Esophagus muscularis mucosa (tissue), 4 donors: ENCODE measurements at regions of chr16 and their contacts with region 1.

Region 1: DNA sequence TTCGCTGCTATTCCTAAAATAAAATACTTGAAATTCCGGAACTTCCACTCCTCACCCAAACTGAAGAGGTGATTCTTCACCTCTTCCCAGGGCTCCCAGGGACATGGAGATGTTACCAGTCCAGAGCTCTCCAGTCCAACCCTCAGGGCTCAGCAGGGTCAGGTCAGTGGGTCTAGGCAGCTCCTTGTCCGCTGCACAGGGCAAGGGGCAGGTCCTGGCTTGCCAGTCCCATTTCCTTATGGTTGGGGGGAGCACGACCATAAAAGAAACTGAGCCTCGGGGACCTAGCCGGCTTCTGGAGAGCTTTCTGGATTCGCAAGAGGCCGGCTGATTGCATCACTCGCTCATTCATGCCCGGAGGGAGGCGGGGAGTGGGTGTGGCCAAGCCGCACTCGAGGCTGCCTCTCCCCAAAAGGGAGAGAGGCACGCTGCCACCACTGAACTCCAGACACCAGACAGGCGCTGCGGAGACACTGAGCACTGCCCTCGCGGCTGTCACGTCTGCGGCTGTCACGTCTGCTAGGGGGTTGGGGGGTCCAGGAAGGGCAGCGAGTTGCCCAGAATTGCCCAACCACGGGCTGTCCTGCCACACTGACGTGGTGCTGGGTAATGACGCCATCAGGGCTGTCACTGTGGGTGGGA is 15.8 kb downstream of the SLC7A5 start:
- DNase-seq: peak; percentile 98
- H3K4me3 ChIP-seq: peak overlapping the region; percentile 42 to 59 (median 42)
- H3K27ac ChIP-seq: peak overlapping the region; percentile 78 to 84 (median 82)
- H3K4me1 ChIP-seq: peaks cover 38 to 77% (median 72%) of the 10 kb centered on the region in 4 donors
- H3K27me3 ChIP-seq: no peaks in the 10 kb centered on the region
- CTCF ChIP-seq: no peak
- EP300 ChIP-seq: peak; percentile 72
- POLR2A ChIP-seq: no peak

Region 2: DNA sequence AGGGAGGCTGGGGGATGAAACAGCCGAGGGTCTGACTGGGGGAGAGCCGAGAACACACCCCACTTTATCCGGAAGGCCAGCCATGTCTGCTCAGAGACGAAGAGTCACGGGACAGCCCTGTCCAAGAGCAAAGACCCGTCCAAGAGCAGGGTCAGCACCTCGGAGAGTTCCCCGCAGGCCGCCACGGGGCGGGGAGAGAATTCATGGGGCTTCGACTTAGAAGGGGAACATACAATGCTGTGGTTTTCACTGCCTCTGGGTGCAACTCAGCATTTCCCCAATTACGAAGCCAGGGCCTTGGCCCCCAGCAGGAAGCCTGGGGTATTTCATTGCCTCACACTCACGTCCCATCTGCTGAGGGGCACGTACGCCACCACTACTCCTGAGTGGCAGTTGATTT is 192.0 kb before region 1 on chr16:
- intact Hi-C with region 1: no loop called
- DNase-seq: no peak
- H3K4me3 ChIP-seq: no peak overlapping the region
- H3K27ac ChIP-seq: no peak overlapping the region
- H3K4me1 ChIP-seq: no peaks in the 10 kb centered on the region
- H3K27me3 ChIP-seq: peaks cover 0 to 95% (median 0%) of the 10 kb centered on the region in 4 donors
- CTCF ChIP-seq: no peak
- EP300 ChIP-seq: no peak
- POLR2A ChIP-seq: no peak

Region 3: DNA sequence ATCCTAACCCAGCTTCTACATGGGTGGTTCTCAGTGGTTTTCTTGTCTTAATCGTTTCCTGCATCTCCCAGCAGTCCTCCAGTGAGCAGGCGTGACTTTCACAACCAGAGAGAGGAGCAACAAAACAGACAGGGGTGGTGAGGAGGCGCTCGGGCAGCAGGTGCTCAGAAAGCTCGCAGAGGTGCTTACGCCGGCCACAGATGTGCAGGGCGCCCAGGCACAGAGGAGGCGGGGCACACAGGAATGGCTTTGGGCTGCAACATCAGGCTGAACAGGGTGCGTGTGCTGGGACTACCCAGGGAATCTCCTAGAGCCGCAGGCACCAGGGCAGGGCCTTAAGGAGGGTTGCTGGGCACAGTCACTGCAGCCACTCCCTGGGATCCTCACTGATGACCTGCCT is 120.3 kb before region 1 on chr16:
- intact Hi-C with region 1: no loop called
- DNase-seq: no peak
- H3K4me3 ChIP-seq: no peak overlapping the region
- H3K27ac ChIP-seq: no peak overlapping the region
- H3K4me1 ChIP-seq: no peaks in the 10 kb centered on the region
- H3K27me3 ChIP-seq: no peaks in the 10 kb centered on the region
- CTCF ChIP-seq: no peak
- EP300 ChIP-seq: no peak
- POLR2A ChIP-seq: no peak

Region 4: DNA sequence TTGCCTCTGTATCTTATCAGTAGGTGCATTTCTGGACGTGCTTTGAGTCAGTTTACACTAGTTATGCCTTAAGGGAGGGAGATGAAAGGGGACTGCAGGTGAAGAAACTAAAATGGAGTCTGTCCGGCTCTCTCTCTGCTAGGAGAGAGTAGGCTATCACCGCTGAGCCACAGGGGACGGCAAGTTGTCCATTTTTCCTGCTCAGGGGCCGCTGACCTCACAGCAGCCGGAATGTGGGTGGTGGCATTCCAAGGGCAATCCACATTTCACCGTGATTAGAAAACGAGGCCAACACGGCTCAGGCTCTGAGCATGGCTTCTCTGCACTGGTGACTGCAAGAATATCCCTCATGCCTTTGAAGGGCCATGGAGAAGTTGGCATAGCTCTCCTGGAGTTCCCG is 68.7 kb before region 1 on chr16:
- intact Hi-C with region 1: no loop called
- DNase-seq: no peak
- H3K4me3 ChIP-seq: no peak overlapping the region
- H3K27ac ChIP-seq: no peak overlapping the region
- H3K4me1 ChIP-seq: peaks cover 0 to 27% (median 25%) of the 10 kb centered on the region in 4 donors
- H3K27me3 ChIP-seq: peaks cover 0 to 6% (median 0%) of the 10 kb centered on the region in 4 donors
- CTCF ChIP-seq: no peak
- EP300 ChIP-seq: no peak
- POLR2A ChIP-seq: no peak

Region 5: GRCh38 chr16:87874639-87875465 is 21.3 kb after region 1 on chr16:
- intact Hi-C with region 1: loop called (anchors 1 kb)
- DNase-seq: no peak
- H3K4me3 ChIP-seq: no peak overlapping the region
- H3K27ac ChIP-seq: no peak overlapping the region
- H3K4me1 ChIP-seq: peaks cover 0 to 8% (median 5%) of the 10 kb centered on the region in 4 donors
- H3K27me3 ChIP-seq: peaks cover 0 to 59% (median 0%) of the 10 kb centered on the region in 4 donors
- CTCF ChIP-seq: no peak
- EP300 ChIP-seq: no peak
- POLR2A ChIP-seq: no peak